Posterior cingulate gyrus (tissue), 11 donors: ENCODE measurements at regions of chr17 and their contacts with region 1.

Region 1: GRCh38 chr17:45385331-45385997 is 47.2 kb downstream of the ARHGAP27 start:
- DNase-seq: peak; percentile 76 to 98 (median 90)

Region 2: DNA sequence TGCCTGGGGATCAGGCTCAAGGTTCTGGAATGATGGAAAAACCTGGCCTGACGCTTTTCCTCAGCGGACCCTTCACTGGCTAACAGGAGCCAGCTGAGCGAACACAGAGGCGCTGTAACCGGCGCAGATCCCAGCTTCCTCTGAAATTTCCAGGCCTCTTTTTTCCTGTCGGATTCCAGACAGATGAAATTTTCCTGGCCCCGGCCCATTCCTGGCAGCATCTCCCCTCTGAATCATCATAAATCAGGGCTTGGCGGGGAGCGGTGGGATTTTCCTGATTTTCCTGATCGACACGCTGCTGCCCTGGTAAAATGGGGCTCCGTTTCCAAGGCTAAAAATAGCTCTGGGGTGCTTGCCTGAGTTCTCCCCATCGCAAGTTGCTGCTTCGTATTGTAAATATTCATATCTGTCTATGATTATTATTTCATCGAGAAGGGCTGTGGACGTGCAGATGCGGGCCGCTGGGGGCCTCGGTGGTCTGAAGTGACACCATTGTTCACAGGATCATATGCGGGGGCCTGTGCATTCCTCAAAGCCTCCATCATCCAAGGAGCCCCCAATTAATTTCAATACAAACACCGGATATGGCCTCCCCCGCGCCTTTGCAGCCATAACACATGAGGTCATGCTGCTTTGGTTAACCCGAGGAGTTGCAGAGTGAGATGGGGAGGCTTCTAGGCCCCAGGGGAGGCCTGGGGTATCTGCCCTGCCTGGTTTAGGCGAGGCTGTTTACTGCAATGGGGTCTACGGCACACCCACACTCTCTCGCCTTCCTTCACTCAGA is 1793.5 kb before region 1 on chr17:
- intact Hi-C with region 1: no loop called
- DNase-seq: peak in 2 of 10 donors; percentile 17 to 30

Region 3: DNA sequence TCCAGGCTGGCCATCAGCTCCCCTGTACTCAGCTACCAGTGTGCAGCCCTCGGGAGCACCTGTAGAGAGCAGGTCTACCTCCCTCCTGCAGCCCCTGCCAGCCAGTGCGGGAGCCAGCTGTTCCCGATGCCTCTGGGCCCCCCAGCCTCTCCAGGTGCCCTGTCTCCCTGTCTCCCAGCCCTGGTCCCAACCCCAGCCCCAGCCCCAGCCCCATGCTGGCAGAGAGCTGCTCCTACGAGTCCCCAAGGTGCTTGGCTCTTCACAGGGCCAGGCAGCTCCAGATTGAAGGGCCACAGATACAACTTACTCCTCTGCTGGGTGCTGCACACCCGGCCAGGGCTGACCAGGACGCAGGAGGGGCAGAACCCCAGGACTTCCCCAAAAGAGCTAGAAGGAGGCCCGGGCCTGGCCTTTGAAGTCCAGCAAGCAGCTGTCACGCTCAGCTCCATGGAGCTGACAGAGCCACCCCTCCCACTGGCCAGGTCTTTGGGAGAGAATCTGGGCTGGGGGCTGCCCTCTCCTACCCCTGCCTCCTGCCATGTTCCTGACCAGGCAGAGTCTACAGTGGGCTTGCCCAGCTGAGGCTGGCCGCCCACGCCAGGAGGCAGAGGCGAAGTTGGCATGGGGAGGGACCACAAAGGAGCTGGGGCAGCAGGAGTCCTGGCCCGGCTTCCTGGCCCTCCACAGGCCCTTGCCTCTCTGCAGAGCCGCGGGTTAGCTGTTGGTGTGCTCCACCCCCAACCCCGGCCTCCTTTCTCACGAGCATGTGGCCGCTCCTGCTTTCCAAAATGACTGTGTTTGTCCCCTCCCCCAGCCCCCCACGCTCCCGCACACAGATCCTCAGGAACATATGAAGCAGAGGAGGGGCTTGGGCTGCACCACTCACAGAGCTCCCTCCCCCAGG is 636.1 kb before region 1 on chr17:
- intact Hi-C with region 1: no loop called
- DNase-seq: peak in 8 of 10 donors; percentile 22 to 92 (median 67)

Region 4: GRCh38 chr17:45218895-45219661 is 166.4 kb before region 1 on chr17:
- intact Hi-C with region 1: loop called (anchors 1 kb)
- DNase-seq: peak; percentile 78 to 98 (median 94)

Region 5: GRCh38 chr17:45277216-45277849 is 108.1 kb before region 1 on chr17:
- intact Hi-C with region 1: loop called (anchors 1 kb)
- DNase-seq: peak; percentile 74 to 98 (median 90)

Region 6: DNA sequence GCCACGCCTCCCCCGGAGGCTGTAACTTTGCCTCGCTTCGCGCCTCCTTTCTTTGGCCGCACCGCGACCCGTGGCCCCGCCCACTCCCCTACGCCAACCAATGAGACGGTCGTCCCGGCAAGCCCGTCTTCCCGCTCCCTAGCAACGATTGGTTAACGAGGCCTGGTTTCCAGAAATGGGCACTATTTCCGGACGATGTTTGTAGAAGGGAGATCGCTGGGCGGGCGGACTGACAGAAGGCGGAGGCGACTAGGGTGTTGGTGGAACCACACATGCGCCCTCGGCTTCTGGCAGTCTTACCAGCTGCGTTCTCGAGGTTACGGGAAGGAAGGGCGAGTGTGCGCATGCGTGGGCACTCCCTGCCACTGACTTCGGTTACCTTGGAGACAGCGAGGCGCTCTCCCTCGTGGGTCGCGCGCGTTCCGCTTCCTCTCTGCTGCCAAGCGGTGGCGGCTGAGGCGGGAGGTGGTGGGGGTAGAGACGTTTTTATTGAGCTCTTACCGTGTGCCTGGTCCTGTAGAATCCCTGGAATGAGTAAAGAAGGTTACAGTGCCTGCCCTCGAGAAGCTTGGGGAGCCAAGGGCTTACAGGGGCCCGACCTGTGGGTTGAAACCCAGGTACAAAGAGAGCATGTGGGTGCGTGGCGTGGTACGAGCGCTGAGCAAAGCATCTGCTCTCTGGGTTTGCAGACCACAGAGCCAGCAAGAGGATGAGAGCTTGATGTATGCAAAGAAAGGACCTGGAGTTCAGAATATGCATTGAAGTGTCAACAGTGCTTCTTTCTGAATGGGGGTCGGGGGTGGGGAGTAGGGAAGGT is 68.1 kb before region 1 on chr17:
- intact Hi-C with region 1: loop called (anchors 10 kb)
- DNase-seq: peak; percentile 98 to 100 (median 99)

Region 7: GRCh38 chr17:45341533-45342158 is 43.8 kb before region 1 on chr17:
- intact Hi-C with region 1: no loop called
- DNase-seq: peak in 2 of 10 donors; percentile 9 to 67